Heart right ventricle (tissue), 16 donors: ENCODE measurements at regions of chr16 and their contacts with region 1.

Region 1: DNA sequence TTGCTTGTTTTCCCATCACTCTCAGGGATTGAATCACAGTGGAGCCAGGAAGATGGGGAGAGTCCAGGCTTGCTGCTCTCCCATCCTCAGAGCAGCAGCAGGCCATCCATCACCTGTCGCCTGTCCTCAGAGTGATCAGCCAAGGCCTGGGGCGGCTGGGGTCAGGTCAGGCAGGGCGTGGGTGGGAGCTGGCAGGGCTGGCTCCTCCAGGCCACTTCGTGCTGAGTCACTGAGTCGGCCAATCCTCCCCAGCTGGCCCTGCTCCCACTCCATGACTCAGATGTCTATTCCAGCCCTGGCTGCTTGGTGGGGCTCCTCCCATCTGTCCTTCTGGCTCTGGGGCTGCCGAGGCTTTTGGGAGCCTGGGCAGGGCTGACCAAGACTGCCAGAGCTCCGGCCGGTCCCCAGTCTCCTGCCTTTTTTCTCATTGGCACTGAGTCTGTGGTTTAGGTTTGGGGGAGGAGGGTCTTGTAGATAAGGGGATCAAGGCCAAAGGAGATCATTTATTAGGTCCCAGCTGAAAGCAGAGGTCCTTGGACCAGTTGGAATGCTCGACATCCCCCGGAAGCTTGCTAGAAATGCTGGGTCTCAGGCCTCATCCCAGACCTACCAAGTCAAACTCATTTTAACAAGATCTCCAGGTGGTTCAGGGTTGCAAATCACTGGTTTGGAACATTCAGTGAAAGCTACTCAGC is 72.7 kb downstream of the ABCC1 start:
- DNase-seq: peak; percentile 94 to 96
- ATAC-seq: peak; percentile 97 to 99 (median 98)
- H3K4me3 ChIP-seq: peak overlapping the region in 3 of 10 donors; percentile 8 to 17 (median 10)
- H3K27ac ChIP-seq: peak overlapping the region; percentile 46 to 89 (median 78)
- H3K4me1 ChIP-seq: peaks cover 2 to 38% (median 25%) of the 10 kb centered on the region in 9 donors
- H3K27me3 ChIP-seq: no peaks in the 10 kb centered on the region
- CTCF ChIP-seq: no peak

Region 2: GRCh38 chr16:15888072-15888976 is 133.8 kb before region 1 on chr16 and contains the start of gene CEP20:
- intact Hi-C with region 1: loop called in 4 of 10 experiments (anchors 5 to 10 kb)
- DNase-seq: peak; percentile 99 to 100
- ATAC-seq: peak; percentile 100
- H3K4me3 ChIP-seq: peak within 1 kb of the TSS; percentile 62 to 99 (median 78)
- H3K27ac ChIP-seq: peak within 1 kb of the TSS; percentile 31 to 95 (median 88)
- H3K4me1 ChIP-seq: peaks cover 0 to 33% (median 28%) of the 10 kb centered on the region in 9 donors
- H3K27me3 ChIP-seq: no peaks in the 10 kb centered on the region
- CTCF ChIP-seq: peak in 5 of 9 donors; percentile 22 to 38 (median 31)
- total RNA-seq, gene CEP20: 24.1 to 42.6 (median 32.5) TPM

Region 3: DNA sequence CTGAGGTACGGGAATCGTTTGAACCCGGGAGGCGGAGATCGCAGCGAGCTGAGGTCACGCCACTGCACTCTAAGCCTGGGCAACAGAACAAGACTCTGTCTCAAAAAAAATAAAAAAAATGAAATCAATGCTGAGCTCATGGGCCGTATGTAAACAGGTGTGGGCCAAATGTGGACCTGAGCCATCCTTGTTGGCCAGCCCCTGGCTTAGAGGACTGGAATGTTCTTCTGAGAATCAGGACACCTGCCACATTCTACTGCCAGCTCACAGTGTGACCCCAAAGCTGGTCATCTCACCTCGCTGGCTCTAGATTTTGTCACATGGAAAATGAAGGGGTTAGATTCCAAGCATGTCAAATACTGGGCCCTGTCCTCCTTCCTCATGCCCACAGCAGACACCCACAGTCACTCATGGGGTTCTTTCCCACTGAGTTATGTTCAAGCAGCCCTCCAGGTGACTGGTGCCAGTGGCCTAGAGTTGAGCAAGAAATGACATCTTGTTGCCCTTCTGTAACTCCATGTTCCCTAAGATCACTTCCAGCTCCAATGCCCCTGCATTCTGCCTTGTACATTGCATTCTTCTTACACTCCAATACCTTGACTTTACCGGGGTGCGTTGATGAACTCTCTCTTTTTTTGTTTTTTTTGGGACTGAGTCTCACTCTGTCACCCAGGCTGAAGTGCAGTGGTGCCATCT is 37.9 kb after region 1 on chr16:
- intact Hi-C with region 1: loop called in 1 of 10 experiments (anchors 5 kb)
- DNase-seq: no peak
- ATAC-seq: no peak
- H3K4me3 ChIP-seq: no peak overlapping the region
- H3K27ac ChIP-seq: no peak overlapping the region
- H3K4me1 ChIP-seq: peaks cover 0 to 15% (median 6%) of the 10 kb centered on the region in 9 donors
- H3K27me3 ChIP-seq: no peaks in the 10 kb centered on the region
- CTCF ChIP-seq: no peak

Region 4: GRCh38 chr16:16073891-16074881 is 52.1 kb after region 1 on chr16:
- intact Hi-C with region 1: loop called in 1 of 10 experiments (anchors 5 kb)
- DNase-seq: no peak
- ATAC-seq: peak in 6 of 8 donors; percentile 46 to 63 (median 57)
- H3K4me3 ChIP-seq: no peak overlapping the region
- H3K27ac ChIP-seq: peak overlapping the region in 4 of 10 donors; percentile 15 to 69 (median 54)
- H3K4me1 ChIP-seq: peaks cover 5 to 43% (median 24%) of the 10 kb centered on the region in 9 donors
- H3K27me3 ChIP-seq: no peaks in the 10 kb centered on the region
- CTCF ChIP-seq: no peak